Common myeloid progenitor, CD34-positive (primary cell): ENCODE measurements at regions of chr11 and their contacts with region 1.

Region 1: DNA sequence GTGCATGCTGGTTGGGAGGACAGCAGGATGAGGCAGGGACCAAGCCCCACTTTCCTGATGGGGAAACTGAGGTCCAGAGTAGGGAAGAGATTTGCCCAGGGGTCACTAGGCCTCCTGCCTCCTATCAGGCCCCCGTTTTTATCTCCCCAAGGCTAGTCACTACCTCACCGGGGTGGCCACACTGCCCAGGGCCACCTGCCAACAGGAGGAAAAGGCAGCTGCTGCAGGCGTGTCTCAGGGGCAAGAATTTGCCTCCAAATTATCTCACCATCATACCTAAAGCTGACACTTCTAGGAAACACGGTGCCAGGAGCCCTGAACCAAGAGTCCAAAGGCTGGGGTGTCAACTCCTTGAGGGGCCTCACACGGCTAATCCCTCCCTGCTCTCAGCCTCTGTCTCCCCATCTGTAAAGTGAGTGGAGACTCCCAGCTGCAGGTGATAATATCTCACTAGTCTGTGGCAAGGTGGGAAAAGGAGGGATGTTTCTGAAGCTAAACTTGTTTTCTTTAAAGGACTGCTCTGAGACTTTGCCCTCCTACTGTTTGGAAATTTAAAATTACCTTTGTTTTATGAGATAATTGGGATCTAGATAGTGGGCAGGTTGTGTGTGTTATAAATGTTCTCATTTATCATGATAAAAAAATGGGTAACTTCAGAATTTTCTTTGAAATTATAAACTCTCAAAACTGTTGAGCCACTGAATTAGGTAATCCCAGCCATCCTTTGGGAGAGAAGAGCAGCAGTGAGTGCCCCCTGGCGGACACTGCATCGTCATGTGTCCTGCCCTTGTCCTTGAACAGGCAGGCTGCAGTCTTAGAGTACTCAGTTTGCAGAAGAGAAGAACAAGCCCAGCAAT is 60.0 kb downstream of the MYO7A start:
- DNase-seq: peak; percentile 73 to 89 (median 80)
- H3K4me3 ChIP-seq: no peak overlapping the region
- H3K27ac ChIP-seq: no peak overlapping the region
- H3K4me1 ChIP-seq: no peaks in the 10 kb centered on the region
- H3K27me3 ChIP-seq: no peaks in the 10 kb centered on the region

Region 2: GRCh38 chr11:77106321-77106720 is 81.7 kb before region 1 on chr11:
- CTCF ChIA-PET with region 1: interaction called, 42 read pairs
- POLR2A ChIA-PET with region 1: no interaction called
- DNase-seq: no peak
- H3K4me3 ChIP-seq: no peak overlapping the region
- H3K27ac ChIP-seq: no peak overlapping the region
- H3K4me1 ChIP-seq: no peaks in the 10 kb centered on the region
- H3K27me3 ChIP-seq: no peaks in the 10 kb centered on the region

Region 3: DNA sequence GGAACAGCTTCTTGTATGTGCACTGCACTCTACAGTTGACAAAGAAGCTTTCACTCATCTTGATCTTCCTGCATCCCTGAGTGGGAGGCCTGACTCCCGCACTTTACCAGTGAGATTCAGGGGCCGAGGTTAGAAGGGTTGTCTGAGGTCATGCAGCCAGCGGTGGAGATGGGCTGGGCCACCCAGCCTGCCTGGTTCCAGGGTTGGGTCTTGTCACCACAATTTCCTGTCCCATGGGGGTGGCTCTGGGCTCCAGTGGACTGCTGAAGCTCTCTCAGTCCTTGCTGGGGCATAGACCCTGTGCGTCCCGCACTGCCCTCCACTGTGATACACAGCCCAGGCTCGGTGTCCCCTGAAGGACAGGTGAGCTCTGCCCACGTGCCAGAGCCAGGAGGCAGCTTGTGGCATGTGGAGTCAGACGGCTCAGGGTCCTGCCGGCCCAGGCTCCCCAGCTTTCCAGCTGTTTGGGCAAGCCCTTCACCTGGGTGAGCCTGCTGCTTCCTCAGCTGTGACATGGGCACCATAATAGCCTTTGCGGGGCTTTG is 66.8 kb before region 1 on chr11:
- CTCF ChIA-PET with region 1: interaction called, 240 read pairs
- POLR2A ChIA-PET with region 1: no interaction called
- DNase-seq: peak in 2 of 3 donors; percentile 27 to 43
- H3K4me3 ChIP-seq: no peak overlapping the region
- H3K27ac ChIP-seq: no peak overlapping the region
- H3K4me1 ChIP-seq: peaks cover 0 to 16% (median 10%) of the 10 kb centered on the region in 4 experiments
- H3K27me3 ChIP-seq: no peaks in the 10 kb centered on the region

Region 4: GRCh38 chr11:77140231-77140851 is 47.7 kb before region 1 on chr11:
- CTCF ChIA-PET with region 1: interaction called, 240 read pairs
- POLR2A ChIA-PET with region 1: no interaction called
- DNase-seq: no peak
- H3K4me3 ChIP-seq: no peak overlapping the region
- H3K27ac ChIP-seq: no peak overlapping the region
- H3K4me1 ChIP-seq: peaks cover 0 to 23% (median 15%) of the 10 kb centered on the region in 4 experiments
- H3K27me3 ChIP-seq: peaks cover 0 to 34% (median 17%) of the 10 kb centered on the region in 5 experiments

Region 5: GRCh38 chr11:77175869-77176539 is 12.0 kb before region 1 on chr11:
- CTCF ChIA-PET with region 1: interaction called, 10 read pairs
- POLR2A ChIA-PET with region 1: no interaction called
- DNase-seq: peak in 2 of 3 donors; percentile 60 to 66
- H3K4me3 ChIP-seq: peak overlapping the region in 2 of 7 experiments; percentile 10 to 28
- H3K27ac ChIP-seq: no peak overlapping the region
- H3K4me1 ChIP-seq: peaks cover 2 to 36% (median 31%) of the 10 kb centered on the region in 4 experiments
- H3K27me3 ChIP-seq: no peaks in the 10 kb centered on the region